ENCODE measurements at regions of chr13 and their contacts with region 1.

Region 1: DNA sequence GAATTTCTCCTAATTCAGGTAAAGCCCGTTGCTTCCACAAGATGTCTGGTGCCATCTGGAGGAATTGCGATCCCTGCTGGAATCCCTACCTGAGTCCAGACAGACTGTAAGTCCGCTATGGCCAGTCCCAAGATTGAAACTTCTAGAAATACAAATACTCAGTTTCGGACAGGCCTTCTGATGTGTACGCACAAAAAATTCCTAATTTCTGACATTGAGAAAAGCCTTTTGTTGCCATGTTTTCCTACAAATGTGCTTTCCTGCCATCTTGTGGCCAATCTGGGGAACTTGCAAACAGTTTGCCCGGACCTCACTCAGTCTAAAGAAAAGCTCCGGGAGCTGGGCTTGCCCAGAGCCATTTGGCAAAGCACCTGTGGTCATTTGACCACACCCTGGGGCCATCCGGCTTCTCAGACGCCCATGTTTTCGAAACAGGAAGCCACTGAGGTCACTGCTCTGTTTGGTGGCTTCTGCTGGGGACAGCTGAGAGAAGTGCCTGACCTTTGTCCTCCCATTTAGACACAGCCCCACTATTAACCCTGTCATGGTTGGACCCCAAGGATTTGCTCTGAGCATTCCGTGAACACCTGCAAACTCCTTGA is 79.4 kb downstream of the SLC15A1 start:
- DNase-seq: peak; percentile 56
- H3K4me3 ChIP-seq: no peak overlapping the region
- H3K27ac ChIP-seq: no peak overlapping the region
- H3K4me1 ChIP-seq: no peaks in the 10 kb centered on the region
- CTCF ChIP-seq: peak; percentile 82

Region 2: GRCh38 chr13:97855570-97856303 is 817.3 kb before region 1 on chr13:
- CTCF ChIA-PET with region 1: no interaction called
- POLR2A ChIA-PET with region 1: no interaction called
- intact Hi-C with region 1: loop called (anchors 5 kb)
- DNase-seq: peak; percentile 61
- H3K4me3 ChIP-seq: no peak overlapping the region
- H3K27ac ChIP-seq: no peak overlapping the region
- H3K4me1 ChIP-seq: peaks cover 4% of the 10 kb centered on the region
- CTCF ChIP-seq: peak; percentile 83

Region 3: DNA sequence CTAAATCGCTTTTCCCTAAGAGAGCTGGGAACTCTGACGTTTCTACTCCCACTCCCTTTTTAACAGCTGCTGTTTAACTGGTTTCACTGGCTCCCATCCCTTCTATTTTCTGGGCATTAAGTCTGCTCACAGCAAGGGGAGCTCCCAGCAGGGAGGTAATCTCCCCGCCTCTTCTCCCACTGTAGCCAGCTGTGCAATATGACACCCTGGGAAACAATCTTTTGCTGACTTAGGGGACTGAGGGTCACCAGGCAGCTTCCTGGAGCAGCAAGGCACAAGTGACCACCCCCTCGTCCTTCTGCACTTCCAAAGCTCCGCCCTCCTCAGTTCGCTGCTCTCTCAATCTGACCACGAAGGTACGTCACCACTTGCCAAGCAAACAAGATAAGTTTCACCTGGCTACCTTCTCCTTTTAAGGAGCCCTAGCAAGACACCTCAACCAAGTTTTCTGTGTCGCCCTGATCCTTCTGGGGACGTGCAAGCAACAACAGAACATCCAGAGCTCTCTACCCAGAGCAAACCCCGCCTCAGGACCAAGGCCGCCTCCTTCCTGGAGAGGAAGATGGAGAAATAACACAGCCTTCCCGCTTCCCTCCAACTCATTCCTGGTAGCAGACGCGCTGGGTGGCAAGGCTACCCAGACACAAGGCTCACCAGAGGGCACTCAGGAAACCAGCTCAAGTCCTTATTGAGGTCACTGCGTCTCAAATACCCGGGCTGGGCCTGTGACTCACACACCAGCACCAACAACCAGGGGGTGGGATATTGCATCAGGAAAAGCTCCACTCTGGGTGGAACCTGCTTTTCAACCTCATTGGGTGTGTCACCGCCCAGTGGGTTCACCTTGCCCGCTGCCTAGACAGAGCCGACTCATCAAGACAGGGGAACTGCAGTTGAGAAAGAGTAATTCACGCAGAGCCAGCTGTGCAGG is 188.5 kb before region 1 on chr13:
- CTCF ChIA-PET with region 1: no interaction called
- POLR2A ChIA-PET with region 1: no interaction called
- intact Hi-C with region 1: no loop called
- DNase-seq: no peak
- H3K4me3 ChIP-seq: no peak overlapping the region
- H3K27ac ChIP-seq: no peak overlapping the region
- H3K4me1 ChIP-seq: peaks cover 47% of the 10 kb centered on the region
- CTCF ChIP-seq: no peak

Region 4: DNA sequence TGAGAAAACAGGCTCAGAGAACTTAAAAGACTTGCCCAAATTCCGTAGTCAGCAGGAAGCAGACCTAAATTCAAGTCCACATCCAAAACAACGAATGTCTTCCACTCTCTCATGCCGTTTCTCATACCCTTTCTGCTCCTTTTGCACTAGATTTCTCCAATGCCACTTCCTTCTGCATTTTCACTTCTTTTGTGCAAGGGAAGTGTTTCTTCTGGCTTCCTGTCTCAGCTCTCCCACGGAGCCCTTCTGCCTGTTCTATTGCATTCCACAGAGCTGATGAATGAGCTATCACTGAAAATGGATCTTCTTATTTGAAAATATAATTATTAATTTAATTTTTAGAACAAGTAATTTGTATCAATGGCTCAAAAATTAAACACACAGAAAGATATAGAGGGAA is 40.1 kb before region 1 on chr13:
- CTCF ChIA-PET with region 1: no interaction called
- POLR2A ChIA-PET with region 1: no interaction called
- intact Hi-C with region 1: no loop called
- DNase-seq: no peak
- H3K4me3 ChIP-seq: no peak overlapping the region
- H3K27ac ChIP-seq: no peak overlapping the region
- H3K4me1 ChIP-seq: no peaks in the 10 kb centered on the region
- CTCF ChIP-seq: no peak

Region 5: DNA sequence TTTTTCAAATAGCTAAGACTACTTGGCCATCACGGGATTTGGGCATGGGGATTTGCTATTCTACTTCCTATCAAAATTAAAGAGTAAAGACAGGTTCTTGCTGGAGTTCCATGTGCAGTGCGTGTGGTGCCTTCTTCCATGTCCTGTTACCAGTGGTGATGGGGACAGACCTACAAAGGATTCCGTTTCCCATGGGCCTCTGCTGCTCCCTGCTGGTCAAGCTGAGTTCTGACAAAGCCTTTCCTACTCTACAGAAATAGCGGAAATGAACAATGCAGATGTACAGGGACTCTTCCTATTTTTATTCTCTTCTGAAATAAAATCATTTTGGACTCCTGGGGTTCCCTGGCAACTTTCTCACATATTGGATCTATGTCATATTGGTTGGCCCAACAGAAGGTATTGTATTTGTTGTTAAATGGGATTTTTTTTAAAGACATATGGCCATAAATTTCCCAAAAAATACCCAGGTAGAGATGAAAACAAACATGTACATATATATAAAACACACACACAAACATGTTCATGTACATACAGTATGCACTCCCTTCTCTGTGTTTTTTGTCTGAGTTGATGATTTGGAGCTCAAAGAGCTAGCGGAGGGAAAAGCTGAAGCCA is 169.9 kb after region 1 on chr13:
- CTCF ChIA-PET with region 1: no interaction called
- POLR2A ChIA-PET with region 1: no interaction called
- intact Hi-C with region 1: loop called (anchors 1 kb)
- DNase-seq: peak; percentile 71
- H3K4me3 ChIP-seq: no peak overlapping the region
- H3K27ac ChIP-seq: no peak overlapping the region
- H3K4me1 ChIP-seq: peaks cover 2% of the 10 kb centered on the region
- CTCF ChIP-seq: peak; percentile 80

Region 6: DNA sequence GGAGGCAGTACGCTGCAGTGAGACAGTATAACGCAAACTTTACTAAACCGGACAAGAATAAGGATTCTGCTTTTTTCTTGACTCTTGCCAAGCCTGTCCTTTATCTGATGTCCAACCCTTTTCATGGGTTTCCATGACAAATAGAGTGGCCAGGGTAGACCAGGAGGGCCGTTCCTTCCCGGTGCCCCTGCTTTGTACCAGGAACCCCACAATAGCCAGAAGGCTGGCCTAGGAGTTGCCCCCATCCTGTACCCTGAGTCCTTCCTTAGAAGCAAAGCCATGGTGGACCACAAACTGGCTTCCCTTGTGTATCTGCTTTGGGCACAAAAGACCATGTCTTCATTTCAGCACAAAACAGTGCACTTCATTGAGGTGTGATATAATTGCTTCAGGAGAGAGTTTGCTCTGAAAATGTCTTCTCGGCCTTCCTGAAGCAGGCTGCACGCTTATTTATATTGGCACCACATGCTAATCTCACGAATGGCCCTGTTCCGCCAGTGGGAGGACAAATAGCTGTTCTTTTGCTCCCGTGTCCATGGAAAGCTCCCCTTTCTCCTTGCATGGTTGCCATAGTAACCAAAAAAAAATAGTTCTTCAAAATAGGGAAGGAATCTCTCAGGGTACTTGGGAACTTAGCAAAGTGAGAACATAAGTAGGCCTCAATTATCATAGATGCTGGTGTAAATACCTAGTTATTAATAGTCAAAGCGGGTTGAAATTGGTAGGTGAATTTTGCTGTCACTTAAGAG is 1076.4 kb after region 1 on chr13:
- CTCF ChIA-PET with region 1: no interaction called
- POLR2A ChIA-PET with region 1: no interaction called
- intact Hi-C with region 1: no loop called
- DNase-seq: no peak
- H3K4me3 ChIP-seq: no peak overlapping the region
- H3K27ac ChIP-seq: no peak overlapping the region
- H3K4me1 ChIP-seq: no peaks in the 10 kb centered on the region
- CTCF ChIP-seq: no peak